ENCODE measurements at regions of chr22 and their contacts with region 1.

Region 1: DNA sequence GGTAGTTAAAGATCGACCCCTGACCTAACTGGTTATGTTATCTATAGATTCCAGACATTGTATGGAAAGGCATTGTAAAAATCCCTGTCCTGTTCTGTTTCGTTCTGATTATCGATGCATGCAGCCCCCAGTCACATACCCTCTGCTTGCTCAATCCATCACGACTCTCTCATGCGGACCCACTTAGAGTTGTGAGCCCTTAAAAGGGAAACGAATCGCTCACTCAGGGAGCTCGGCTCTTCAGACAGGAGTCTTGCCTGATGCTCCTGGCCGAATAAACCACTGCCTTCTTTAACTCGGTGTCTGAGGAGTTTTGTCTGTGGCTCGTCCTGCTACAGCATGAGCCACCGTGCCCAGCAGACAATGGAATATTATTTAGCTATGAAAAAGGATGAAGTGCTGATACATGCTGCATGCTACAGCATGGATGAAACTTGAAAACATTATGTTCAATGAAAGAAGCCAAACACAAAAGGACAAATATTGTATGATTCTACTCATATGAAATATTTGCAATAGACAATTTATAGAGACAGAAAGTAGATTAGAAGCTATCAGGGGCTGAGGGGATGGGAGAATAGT is 12.0 kb upstream of the LGALS2 start:
- DNase-seq: no peak
- ATAC-seq: no peak
- H3K4me3 ChIP-seq: peak overlapping the region; percentile 7
- H3K4me3 Mint-ChIP-seq: peak overlapping the region; percentile 85
- H3K27ac ChIP-seq: peak overlapping the region; percentile 12
- H3K27ac Mint-ChIP-seq: peak overlapping the region; percentile 61 to 70
- H3K4me1 ChIP-seq: peaks cover 11% of the 10 kb centered on the region
- H3K4me1 Mint-ChIP-seq: peaks cover 11 to 12% of the 10 kb centered on the region in 2 donors
- H3K27me3 ChIP-seq: no peaks in the 10 kb centered on the region
- H3K27me3 Mint-ChIP-seq: peaks cover 0 to 3% of the 10 kb centered on the region in 2 donors
- CTCF ChIP-seq: no peak

Region 2: GRCh38 chr22:37486224-37486845 is 105.6 kb before region 1 on chr22 and contains the start of gene MFNG:
- intact Hi-C with region 1: no loop called
- DNase-seq: peak; percentile 70 to 85
- ATAC-seq: peak; percentile 77 to 85 (median 81)
- H3K4me3 ChIP-seq: peak within 1 kb of the TSS; percentile 91
- H3K4me3 Mint-ChIP-seq: peak within 1 kb of the TSS; percentile 94
- H3K27ac ChIP-seq: peak within 1 kb of the TSS; percentile 85
- H3K27ac Mint-ChIP-seq: peak within 1 kb of the TSS; percentile 95 to 96
- H3K4me1 ChIP-seq: peaks cover 74% of the 10 kb centered on the region
- H3K4me1 Mint-ChIP-seq: peaks cover 59 to 78% of the 10 kb centered on the region in 2 donors
- H3K27me3 ChIP-seq: no peaks in the 10 kb centered on the region
- H3K27me3 Mint-ChIP-seq: no peaks in the 10 kb centered on the region
- CTCF ChIP-seq: no peak
- total RNA-seq, gene MFNG: 75.3 to 111 (median 110) TPM

Region 3: GRCh38 chr22:37538590-37539357 is 53.1 kb before region 1 on chr22:
- intact Hi-C with region 1: loop called (anchors 1 kb)
- DNase-seq: peak; percentile 84 to 94
- ATAC-seq: peak; percentile 98 to 100 (median 100)
- H3K4me3 ChIP-seq: no peak overlapping the region
- H3K4me3 Mint-ChIP-seq: no peak overlapping the region
- H3K27ac ChIP-seq: no peak overlapping the region
- H3K27ac Mint-ChIP-seq: no peak overlapping the region
- H3K4me1 ChIP-seq: peaks cover 35% of the 10 kb centered on the region
- H3K4me1 Mint-ChIP-seq: peaks cover 7 to 19% of the 10 kb centered on the region in 2 donors
- H3K27me3 ChIP-seq: peaks cover 9% of the 10 kb centered on the region
- H3K27me3 Mint-ChIP-seq: peaks cover 7 to 22% of the 10 kb centered on the region in 2 donors
- CTCF ChIP-seq: peak; percentile 89

Region 4: GRCh38 chr22:37608477-37609239 is 16.7 kb after region 1 on chr22 and contains the start of gene GGA1:
- intact Hi-C with region 1: loop called (anchors 1 kb)
- DNase-seq: peak; percentile 92 to 99
- ATAC-seq: peak; percentile 77 to 94 (median 81)
- H3K4me3 ChIP-seq: peak within 1 kb of the TSS; percentile 84
- H3K4me3 Mint-ChIP-seq: peak within 1 kb of the TSS; percentile 98
- H3K27ac ChIP-seq: peak within 1 kb of the TSS; percentile 94
- H3K27ac Mint-ChIP-seq: peak within 1 kb of the TSS; percentile 98 to 99
- H3K4me1 ChIP-seq: peaks cover 61% of the 10 kb centered on the region
- H3K4me1 Mint-ChIP-seq: peaks cover 37 to 62% of the 10 kb centered on the region in 2 donors
- H3K27me3 ChIP-seq: no peaks in the 10 kb centered on the region
- H3K27me3 Mint-ChIP-seq: no peaks in the 10 kb centered on the region
- CTCF ChIP-seq: no peak
- total RNA-seq, gene GGA1: 69.3 to 87.8 (median 80.2) TPM

Region 5: DNA sequence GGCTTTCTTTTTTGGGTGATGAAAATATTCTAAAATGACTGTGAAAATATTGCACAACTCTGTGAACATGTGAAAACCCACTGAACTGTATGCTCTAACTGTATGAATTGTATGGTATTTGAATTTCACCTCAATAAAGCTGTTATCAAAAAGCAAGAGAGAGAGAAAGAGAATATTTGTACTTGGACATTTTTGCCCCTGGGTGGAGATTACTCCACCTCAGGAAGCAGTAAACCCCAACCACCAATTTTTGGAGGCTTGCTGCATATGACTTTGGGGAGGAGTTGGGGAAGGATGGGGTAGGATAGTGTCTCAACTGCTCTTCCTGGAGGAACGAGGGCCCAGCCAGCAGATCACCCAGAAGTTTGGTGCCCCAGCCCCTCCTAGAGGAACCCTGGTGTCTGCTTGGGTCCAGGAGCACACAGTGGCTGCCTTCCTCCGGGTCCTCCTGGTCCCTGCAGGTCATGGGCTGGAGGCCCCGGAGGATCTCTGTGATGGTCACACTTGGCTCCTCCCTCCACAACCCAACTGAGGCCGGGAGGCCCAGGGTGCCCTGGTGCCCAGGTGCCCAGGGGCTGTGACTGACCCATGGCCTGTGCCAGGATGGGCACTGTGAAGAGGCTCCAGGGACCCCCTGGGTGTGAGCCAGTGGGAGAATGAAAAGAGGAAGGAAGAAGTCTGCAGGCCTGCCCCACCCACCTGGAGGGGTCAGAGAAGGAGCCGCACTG is 450.0 kb after region 1 on chr22:
- intact Hi-C with region 1: no loop called
- DNase-seq: no peak
- ATAC-seq: peak in 2 of 3 donors; percentile 32 to 46
- H3K4me3 ChIP-seq: no peak overlapping the region
- H3K4me3 Mint-ChIP-seq: no peak overlapping the region
- H3K27ac ChIP-seq: no peak overlapping the region
- H3K27ac Mint-ChIP-seq: peak overlapping the region in 1 of 2 donors; percentile 4
- H3K4me1 ChIP-seq: peaks cover 11% of the 10 kb centered on the region
- H3K4me1 Mint-ChIP-seq: peaks cover 9 to 21% of the 10 kb centered on the region in 2 donors
- H3K27me3 ChIP-seq: no peaks in the 10 kb centered on the region
- H3K27me3 Mint-ChIP-seq: no peaks in the 10 kb centered on the region
- CTCF ChIP-seq: no peak

Measured in natural killer cell (primary cell).